Calu3 (cell line): ENCODE measurements at regions of chr1 and their contacts with region 1.

Region 1: GRCh38 chr1:109041621-109042468 is at the start of gene WDR47:
- DNase-seq: peak; percentile 91
- H3K4me3 Mint-ChIP-seq: peak within 1 kb of the TSS; percentile 92
- H3K27ac Mint-ChIP-seq: peak within 1 kb of the TSS; percentile 90
- H3K4me1 Mint-ChIP-seq: no peaks in the 10 kb centered on the region
- H3K27me3 Mint-ChIP-seq: no peaks in the 10 kb centered on the region
- CTCF ChIP-seq: no peak
- total RNA-seq, gene WDR47: 6.3 and 6.8 TPM in 2 replicates

Region 2: GRCh38 chr1:108925920-108926319 is 115.9 kb before region 1 on chr1:
- CTCF ChIA-PET with region 1: interaction called, 14 read pairs
- intact Hi-C with region 1: no loop called
- DNase-seq: no peak
- H3K4me3 Mint-ChIP-seq: no peak overlapping the region
- H3K27ac Mint-ChIP-seq: no peak overlapping the region
- H3K4me1 Mint-ChIP-seq: no peaks in the 10 kb centered on the region
- H3K27me3 Mint-ChIP-seq: no peaks in the 10 kb centered on the region
- CTCF ChIP-seq: no peak